A673 (cell line): ENCODE measurements at regions of chr22 and their contacts with region 1.

Region 1: GRCh38 chr22:37601540-37602442 is 6.8 kb upstream of the GGA1 start:
- DNase-seq: peak; percentile 62
- H3K4me3 ChIP-seq: peak overlapping the region; percentile 7
- H3K27ac ChIP-seq: no peak overlapping the region
- H3K4me1 ChIP-seq: peaks cover 6% of the 10 kb centered on the region
- H3K27me3 ChIP-seq: no peaks in the 10 kb centered on the region
- CTCF ChIP-seq: no peak

Region 2: GRCh38 chr22:36510966-36511881 is 1090.6 kb before region 1 on chr22:
- CTCF ChIA-PET with region 1: no interaction called
- POLR2A ChIA-PET with region 1: interaction called, 15 read pairs
- intact Hi-C with region 1: no loop called
- DNase-seq: peak; percentile 75
- H3K4me3 ChIP-seq: no peak overlapping the region
- H3K27ac ChIP-seq: no peak overlapping the region
- H3K4me1 ChIP-seq: peaks cover 11% of the 10 kb centered on the region
- H3K27me3 ChIP-seq: no peaks in the 10 kb centered on the region
- CTCF ChIP-seq: peak; percentile 68

Region 3: DNA sequence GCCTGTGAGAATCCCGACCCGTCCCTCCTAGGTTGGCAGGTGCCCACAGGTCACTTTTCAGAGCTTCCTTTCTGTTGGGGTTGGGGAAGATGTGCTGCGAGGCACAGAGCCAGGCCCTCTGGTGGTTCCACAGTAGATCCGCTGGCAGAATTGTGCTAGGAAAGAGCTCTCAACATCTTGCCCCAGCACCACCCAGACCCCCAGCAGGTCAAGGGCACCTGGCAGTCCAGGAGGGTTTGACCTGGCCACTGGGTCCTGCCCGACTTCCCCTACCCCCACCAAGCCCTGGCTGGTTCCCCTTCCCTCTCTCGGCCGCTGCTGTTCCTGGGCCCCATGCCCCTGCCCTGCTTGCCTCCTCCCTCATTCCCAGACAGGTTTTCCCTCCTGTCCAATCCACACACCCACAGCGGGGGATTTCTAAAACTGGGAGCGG is 179.7 kb after region 1 on chr22:
- CTCF ChIA-PET with region 1: no interaction called
- POLR2A ChIA-PET with region 1: no interaction called
- intact Hi-C with region 1: no loop called
- DNase-seq: no peak
- H3K4me3 ChIP-seq: no peak overlapping the region
- H3K27ac ChIP-seq: no peak overlapping the region
- H3K4me1 ChIP-seq: no peaks in the 10 kb centered on the region
- H3K27me3 ChIP-seq: no peaks in the 10 kb centered on the region
- CTCF ChIP-seq: peak; percentile 37; the same call in 1 of the 2 replicates

Region 4: DNA sequence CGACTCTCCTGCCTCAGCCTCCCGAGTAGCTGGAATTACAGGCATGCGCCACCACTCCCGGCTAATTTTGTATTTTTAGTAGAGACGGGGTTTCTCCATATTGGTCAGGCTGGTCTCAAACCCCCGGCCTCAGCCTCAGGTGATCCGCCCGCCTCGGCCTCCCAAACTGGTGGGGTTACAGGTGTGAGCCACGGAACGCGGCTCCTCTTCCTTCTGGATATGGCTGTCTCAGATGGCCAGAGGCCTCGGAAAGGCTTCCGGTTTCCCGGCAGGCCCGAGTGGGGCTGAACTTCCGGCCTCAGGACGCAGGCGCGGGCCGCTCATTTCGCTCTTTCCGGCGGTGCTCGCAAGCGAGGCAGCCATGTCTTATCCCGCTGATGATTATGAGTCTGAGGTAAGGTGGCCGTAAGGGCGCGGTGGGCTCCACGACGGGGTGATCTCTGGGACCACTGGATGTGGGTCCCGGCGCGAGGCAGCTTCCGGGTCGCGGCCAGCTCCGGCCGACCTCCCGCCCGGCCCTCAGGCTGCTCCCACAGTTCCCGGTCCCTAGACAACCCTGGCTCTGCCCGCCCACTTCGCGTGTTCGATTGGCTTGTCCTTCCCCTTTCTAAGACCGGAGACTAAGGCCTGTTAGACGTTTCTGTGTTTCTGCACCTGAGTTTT is 247.4 kb after region 1 on chr22 and contains the start of gene EIF3L:
- CTCF ChIA-PET with region 1: no interaction called
- POLR2A ChIA-PET with region 1: interaction called, 10 read pairs
- intact Hi-C with region 1: no loop called
- DNase-seq: peak; percentile 94
- H3K4me3 ChIP-seq: peak within 1 kb of the TSS; percentile 86
- H3K27ac ChIP-seq: peak within 1 kb of the TSS; percentile 82
- H3K4me1 ChIP-seq: peaks cover 9% of the 10 kb centered on the region
- H3K27me3 ChIP-seq: no peaks in the 10 kb centered on the region
- CTCF ChIP-seq: no peak
- total RNA-seq, gene EIF3L: 492 and 528 TPM in 2 replicates